Activated T-helper 2 cell treated with anti-CD3 and anti-CD28 coated beads, Interferon-gamma antibody, Interleukin-2, Interleukin-4, amounts not matched to agents 10 μg/mL and 5 μg/mL and 100 μg/mL, durations not matched to agents 14 hours and 24 hours and 36 hours (primary cell): ENCODE measurements at regions of chr13 and their contacts with region 1.

Region 1: DNA sequence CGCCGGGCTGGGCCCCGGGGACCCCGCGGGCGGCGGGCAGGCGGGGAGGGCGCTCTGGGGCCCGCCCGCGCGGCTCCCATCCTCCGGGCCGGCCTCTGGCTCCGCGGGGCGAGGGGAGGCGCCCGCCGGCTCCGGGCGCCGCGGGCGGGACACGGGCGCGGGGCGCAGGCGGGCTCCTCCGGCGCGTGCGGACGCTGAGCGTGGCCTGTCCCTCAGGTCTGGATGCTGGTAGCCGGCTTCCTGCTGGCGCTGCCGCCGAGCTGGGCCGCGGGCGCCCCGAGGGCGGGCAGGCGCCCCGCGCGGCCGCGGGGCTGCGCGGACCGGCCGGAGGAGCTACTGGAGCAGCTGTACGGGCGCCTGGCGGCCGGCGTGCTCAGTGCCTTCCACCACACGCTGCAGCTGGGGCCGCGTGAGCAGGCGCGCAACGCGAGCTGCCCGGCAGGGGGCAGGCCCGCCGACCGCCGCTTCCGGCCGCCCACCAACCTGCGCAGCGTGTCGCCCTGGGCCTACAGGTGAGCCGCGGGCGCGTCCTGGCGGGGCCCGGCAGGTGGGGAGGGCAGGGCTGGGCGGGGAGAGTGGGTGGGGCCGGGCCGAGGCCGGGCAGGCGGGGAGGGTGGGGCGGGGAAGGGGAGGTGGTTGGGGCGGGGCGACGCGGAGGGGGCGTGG is 414 bp downstream of the IL17D start:
- DNase-seq: peak; percentile 69
- H3K4me3 Mint-ChIP-seq: no peak overlapping the region
- H3K27ac Mint-ChIP-seq: no peak overlapping the region
- H3K4me1 Mint-ChIP-seq: peaks cover 5% of the 10 kb centered on the region
- H3K27me3 Mint-ChIP-seq: peaks cover 37% of the 10 kb centered on the region

Region 2: GRCh38 chr13:20192158-20192835 is 511.6 kb before region 1 on chr13:
- intact Hi-C with region 1: loop called (anchors 5 kb)
- DNase-seq: no peak
- H3K4me3 Mint-ChIP-seq: peak overlapping the region; percentile 54
- H3K27ac Mint-ChIP-seq: no peak overlapping the region
- H3K4me1 Mint-ChIP-seq: peaks cover 16% of the 10 kb centered on the region
- H3K27me3 Mint-ChIP-seq: peaks cover 63% of the 10 kb centered on the region

Region 3: DNA sequence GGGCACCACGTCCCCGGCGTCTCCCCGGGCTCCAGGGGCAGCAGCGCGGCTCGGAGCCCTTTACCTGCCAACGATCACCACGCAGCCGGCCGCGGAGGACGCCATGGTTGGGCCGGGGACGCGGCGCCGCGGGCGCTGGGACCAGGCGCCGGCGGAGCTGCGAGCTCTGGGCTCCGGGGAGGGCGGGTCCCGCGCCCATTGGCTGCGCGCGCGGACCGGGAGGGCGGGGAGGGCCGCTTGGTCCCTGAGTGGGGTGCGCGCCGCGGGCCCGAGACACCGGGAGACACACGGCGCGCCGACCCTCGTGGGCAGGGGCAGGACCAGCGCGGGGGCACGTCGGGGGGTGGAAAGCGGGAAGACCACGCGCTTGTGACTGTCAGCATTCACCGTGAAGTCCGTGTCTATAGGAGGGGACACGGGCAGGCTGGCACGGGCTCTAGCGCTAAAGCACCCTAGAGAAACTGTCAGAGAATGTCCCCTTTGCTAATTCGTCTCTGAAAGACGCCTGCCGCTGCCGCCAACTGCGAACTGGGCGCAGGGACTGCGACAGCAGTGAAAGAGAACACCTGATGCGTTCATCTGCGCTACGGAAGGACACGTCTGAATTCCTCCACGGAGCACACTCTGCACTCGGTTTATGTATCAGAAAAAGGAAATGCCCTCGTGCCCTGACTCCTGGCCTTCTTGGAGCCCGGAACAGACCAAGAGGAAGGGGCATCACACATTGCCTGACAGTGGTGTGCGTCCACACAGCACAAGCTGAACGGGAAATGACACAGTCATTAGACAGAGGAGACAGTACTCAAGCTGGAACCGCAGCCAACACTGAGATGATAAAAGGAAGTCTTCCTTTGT is 178.0 kb before region 1 on chr13 and contains the start of gene CRYL1:
- intact Hi-C with region 1: loop called (anchors 10 kb)
- DNase-seq: peak; percentile 60
- H3K4me3 Mint-ChIP-seq: peak within 1 kb of the TSS; percentile 83
- H3K27ac Mint-ChIP-seq: peak within 1 kb of the TSS; percentile 89
- H3K4me1 Mint-ChIP-seq: peaks cover 21% of the 10 kb centered on the region
- H3K27me3 Mint-ChIP-seq: no peaks in the 10 kb centered on the region
- total RNA-seq, gene CRYL1: 8.7 TPM in 2 replicates

Region 4: DNA sequence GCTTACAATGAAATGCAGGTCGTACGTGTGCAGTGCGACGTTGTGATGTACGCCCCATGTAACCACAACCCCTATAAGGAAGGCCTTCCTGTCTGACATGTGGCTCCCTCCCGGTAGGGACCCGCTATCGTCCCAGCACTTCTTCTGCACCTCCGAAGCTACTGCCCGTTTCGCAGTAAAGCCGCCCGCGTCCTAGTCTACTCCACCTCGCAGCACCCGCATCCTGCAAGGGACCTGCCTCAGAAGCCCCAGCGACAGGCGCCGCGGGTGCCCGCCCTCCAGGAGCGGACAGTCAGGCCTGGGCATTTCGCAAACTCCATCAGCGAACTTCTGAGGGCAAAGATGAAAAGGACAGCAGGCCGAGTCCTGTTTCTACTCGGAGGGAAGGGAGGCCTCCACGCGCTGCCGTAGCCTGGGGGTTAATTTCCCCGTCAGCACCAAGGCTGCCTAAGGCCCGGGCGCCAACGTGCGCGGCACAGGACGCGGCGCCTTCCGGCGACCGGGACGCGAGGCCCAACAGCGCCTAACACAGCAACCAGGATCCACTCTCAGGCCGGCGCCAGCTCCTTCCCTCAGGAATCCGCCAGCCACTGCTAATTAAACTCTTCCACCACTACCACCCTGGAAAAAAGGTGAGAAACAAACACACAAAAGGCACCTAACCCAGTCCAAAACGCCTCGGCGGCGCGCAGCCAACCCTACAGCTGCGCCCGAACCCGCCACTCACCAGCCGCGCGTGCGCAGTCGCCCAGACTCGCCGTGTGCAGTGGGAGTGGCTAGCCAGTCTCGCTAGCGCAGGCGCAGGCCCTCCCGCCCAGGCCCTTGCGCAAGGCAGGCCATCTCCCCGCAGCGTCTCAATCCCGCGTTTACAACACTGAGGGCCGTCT is 69.5 kb after region 1 on chr13 and contains the start of gene EEF1AKMT1:
- intact Hi-C with region 1: loop called (anchors 2 kb)
- DNase-seq: peak; percentile 93
- H3K4me3 Mint-ChIP-seq: peak within 1 kb of the TSS; percentile 95
- H3K27ac Mint-ChIP-seq: peak within 1 kb of the TSS; percentile 99
- H3K4me1 Mint-ChIP-seq: peaks cover 23% of the 10 kb centered on the region
- H3K27me3 Mint-ChIP-seq: no peaks in the 10 kb centered on the region
- total RNA-seq, gene EEF1AKMT1: 12.2 and 12.7 TPM in 2 replicates